Panc1 (cell line): ENCODE measurements at regions of chr13 and their contacts with region 1.

Region 1: GRCh38 chr13:95834134-95834765 is 157.3 kb downstream of the DNAJC3 start:
- DNase-seq: peak; percentile 27
- ATAC-seq: peak; percentile 85
- H3K4me3 ChIP-seq: no peak overlapping the region
- H3K27ac ChIP-seq: no peak overlapping the region
- H3K4me1 ChIP-seq: no peaks in the 10 kb centered on the region
- H3K27me3 ChIP-seq: no peaks in the 10 kb centered on the region
- CTCF ChIP-seq: peak; percentile 87

Region 2: GRCh38 chr13:95536632-95537241 is 297.5 kb before region 1 on chr13:
- CTCF ChIA-PET with region 1: no interaction called
- POLR2A ChIA-PET with region 1: no interaction called
- in situ Hi-C with region 1: no loop called
- intact Hi-C with region 1: loop called (anchors 10 kb)
- DNase-seq: no peak
- ATAC-seq: no peak
- H3K4me3 ChIP-seq: no peak overlapping the region
- H3K27ac ChIP-seq: no peak overlapping the region
- H3K4me1 ChIP-seq: peaks cover 39% of the 10 kb centered on the region
- H3K27me3 ChIP-seq: no peaks in the 10 kb centered on the region
- CTCF ChIP-seq: peak; percentile 48; the same call in 1 of the 2 replicates

Region 3: DNA sequence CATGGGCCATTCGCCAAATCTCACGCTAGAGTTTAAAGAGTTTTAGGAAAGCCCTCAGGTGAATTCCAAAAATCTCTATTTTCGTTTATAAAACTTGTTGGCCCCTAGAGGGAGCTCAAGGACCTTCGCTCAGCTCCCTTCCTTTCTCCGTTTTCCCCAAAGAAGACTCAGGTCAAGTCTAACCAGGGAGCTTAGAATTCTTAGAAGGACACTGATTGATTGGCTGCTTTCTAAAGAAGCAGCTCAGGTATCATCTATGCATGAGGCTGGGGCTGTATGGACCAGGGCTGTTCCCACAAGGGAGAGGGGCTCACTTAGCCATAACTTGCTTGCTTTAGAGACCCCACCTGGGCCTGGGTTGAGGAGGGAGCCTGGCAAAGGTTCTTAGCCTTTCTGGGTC is 210.2 kb before region 1 on chr13:
- CTCF ChIA-PET with region 1: interaction called, 10 read pairs
- POLR2A ChIA-PET with region 1: no interaction called
- in situ Hi-C with region 1: no loop called
- intact Hi-C with region 1: loop called (anchors 5 kb)
- DNase-seq: peak; percentile 10
- ATAC-seq: peak; percentile 77
- H3K4me3 ChIP-seq: no peak overlapping the region
- H3K27ac ChIP-seq: no peak overlapping the region
- H3K4me1 ChIP-seq: no peaks in the 10 kb centered on the region
- H3K27me3 ChIP-seq: no peaks in the 10 kb centered on the region
- CTCF ChIP-seq: peak; percentile 80

Region 4: GRCh38 chr13:95676762-95677563 is 157.3 kb before region 1 on chr13 and contains the start of gene DNAJC3:
- CTCF ChIA-PET with region 1: no interaction called
- POLR2A ChIA-PET with region 1: no interaction called
- in situ Hi-C with region 1: no loop called
- intact Hi-C with region 1: loop called (anchors 10 kb)
- DNase-seq: peak; percentile 43
- ATAC-seq: peak; percentile 98
- H3K4me3 ChIP-seq: peak within 1 kb of the TSS; percentile 58 to 86
- H3K27ac ChIP-seq: peak within 1 kb of the TSS; percentile 88
- H3K4me1 ChIP-seq: peaks cover 16% of the 10 kb centered on the region; the same call in 1 of the 2 replicates
- H3K27me3 ChIP-seq: no peaks in the 10 kb centered on the region
- CTCF ChIP-seq: no peak
- total RNA-seq, gene DNAJC3: 25.7 TPM